Gastrocnemius medialis (tissue), 4 donors: ENCODE measurements at regions of chr18 and their contacts with region 1.

Region 1: GRCh38 chr18:58257461-58257860 is 213.4 kb downstream of the NEDD4L start:
- DNase-seq: peak; percentile 58 to 67
- ATAC-seq: peak; percentile 40 to 49
- H3K4me3 ChIP-seq: peak overlapping the region; percentile 62 to 76 (median 68)
- H3K27ac ChIP-seq: peak overlapping the region; percentile 91 to 97 (median 93)
- H3K4me1 ChIP-seq: peaks cover 32 to 42% of the 10 kb centered on the region in 2 donors
- H3K27me3 ChIP-seq: no peaks in the 10 kb centered on the region
- CTCF ChIP-seq: no peak
- POLR2A ChIP-seq: peak; percentile 39 to 76

Region 2: DNA sequence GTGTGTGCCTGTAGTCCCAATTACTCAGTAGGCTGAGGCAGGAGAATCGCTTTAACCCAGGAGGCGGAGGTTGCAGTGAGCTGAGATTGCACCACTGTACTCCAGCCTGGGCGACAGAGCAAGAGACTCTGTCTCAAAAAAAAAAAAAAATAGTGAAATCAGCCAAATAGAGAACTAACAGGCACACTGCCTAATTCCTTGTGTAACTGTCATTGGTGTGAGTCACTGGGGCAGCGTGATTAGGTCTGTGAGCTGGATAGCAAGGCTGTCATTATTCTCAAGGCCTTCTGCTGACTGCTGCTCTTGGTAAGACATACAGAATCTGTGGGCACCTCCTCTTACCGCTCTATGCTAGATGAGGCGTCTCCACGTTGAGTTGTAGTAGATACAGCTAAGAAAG is 56.8 kb after region 1 on chr18:
- in situ Hi-C with region 1: no loop called
- intact Hi-C with region 1: loop called (anchors 2 kb)
- DNase-seq: peak; percentile 82 to 85
- ATAC-seq: peak; percentile 79 to 81
- H3K4me3 ChIP-seq: peak overlapping the region in 1 of 4 donors; percentile 13
- H3K27ac ChIP-seq: peak overlapping the region; percentile 77 to 91 (median 80)
- H3K4me1 ChIP-seq: peaks cover 73 to 81% of the 10 kb centered on the region in 2 donors
- H3K27me3 ChIP-seq: no peaks in the 10 kb centered on the region
- CTCF ChIP-seq: no peak
- POLR2A ChIP-seq: peak; percentile 53 to 59

Region 3: DNA sequence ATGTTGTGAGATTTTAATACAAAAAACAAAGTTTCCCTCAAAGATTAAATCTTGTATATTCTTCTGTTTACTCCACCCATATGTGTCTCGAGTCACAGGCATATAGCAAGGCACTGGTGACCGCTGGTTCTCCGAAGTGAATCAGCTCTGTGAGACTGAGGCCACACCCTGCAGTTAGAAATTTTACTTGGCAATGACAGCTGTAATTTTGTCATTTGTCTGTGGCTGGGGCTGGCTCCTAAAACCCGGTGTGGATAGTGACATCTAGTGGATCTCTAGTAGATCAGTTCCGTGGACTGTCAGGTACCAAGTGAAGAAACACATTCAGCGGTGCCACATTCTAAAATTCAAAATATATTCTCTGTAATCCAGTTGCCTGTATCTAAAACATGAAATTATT is 64.5 kb after region 1 on chr18:
- in situ Hi-C with region 1: loop called in 1 of 4 experiments (anchors 10 kb)
- intact Hi-C with region 1: loop called (anchors 1 kb)
- DNase-seq: peak; percentile 80 to 85
- ATAC-seq: peak; percentile 91 to 98
- H3K4me3 ChIP-seq: peak overlapping the region in 1 of 4 donors; percentile 11
- H3K27ac ChIP-seq: peak overlapping the region; percentile 62 to 85 (median 82)
- H3K4me1 ChIP-seq: peaks cover 26 to 39% of the 10 kb centered on the region in 2 donors
- H3K27me3 ChIP-seq: no peaks in the 10 kb centered on the region
- CTCF ChIP-seq: peak in 4 of 5 experiments; percentile 57 to 74 (median 70)
- POLR2A ChIP-seq: peak; percentile 49 to 51

Region 4: DNA sequence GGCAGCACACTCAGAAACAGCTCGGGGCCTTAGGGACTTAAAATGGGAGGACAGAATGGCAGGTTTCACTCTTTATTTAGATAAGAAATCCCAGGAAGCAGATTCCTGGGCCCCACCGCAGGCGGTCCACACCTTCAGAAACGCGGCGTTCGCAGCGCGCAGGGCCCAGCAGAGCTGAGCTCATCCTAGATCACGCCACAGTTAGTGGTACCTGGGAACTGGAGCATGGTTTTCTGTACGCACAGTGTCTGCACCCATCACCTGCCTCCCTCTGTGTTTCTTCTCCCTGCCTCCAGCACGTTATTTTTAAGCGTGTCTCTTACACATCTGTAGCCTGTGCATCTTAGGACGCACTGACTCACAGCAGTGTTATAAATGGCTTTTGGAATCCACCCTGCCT is 129.3 kb after region 1 on chr18:
- in situ Hi-C with region 1: no loop called
- intact Hi-C with region 1: loop called (anchors 5 kb)
- DNase-seq: no peak
- ATAC-seq: no peak
- H3K4me3 ChIP-seq: no peak overlapping the region
- H3K27ac ChIP-seq: peak overlapping the region in 2 of 4 donors; percentile 19 to 87
- H3K4me1 ChIP-seq: peaks cover 19 to 24% of the 10 kb centered on the region in 2 donors
- H3K27me3 ChIP-seq: no peaks in the 10 kb centered on the region
- CTCF ChIP-seq: no peak
- POLR2A ChIP-seq: no peak